Stomach (tissue), 19 donors: ENCODE measurements at regions of chr21 and their contacts with region 1.

Region 1: DNA sequence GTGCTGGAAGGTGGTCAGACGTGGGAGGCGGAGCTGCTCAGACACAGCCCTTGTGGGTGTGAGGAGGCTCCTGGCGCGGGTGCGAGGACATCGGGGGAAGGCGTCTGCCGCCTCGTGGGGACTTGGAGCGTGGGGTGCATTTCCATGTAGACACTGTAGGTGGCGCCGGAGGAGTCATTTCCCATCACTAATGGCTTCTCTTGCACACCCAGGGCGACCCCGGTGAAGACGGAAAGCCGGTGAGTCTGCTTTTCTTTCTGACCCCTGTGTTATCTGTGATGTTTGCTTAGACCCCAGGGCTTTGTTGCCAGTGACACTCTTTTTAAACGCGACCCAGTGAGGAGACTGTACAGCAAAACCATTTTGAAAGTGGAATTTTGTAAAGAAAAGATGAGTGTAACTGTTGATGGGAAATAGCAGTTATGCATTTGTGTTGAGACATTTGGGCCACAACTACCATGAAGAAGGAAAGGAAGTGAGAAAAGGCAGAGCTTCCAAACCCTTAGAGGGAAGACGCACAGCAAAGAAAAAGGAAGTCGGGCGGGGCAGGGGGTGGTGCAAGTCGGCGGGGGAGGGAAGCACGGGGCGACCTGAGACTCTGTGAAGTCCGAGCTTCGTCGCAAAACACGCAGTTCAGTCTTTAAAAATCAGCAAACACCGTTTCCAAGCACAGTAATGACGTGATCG is 64.0 kb downstream of the SLC19A1 start:
- DNase-seq: peak; percentile 75 to 90
- H3K4me3 ChIP-seq: peak overlapping the region; percentile 3 to 42 (median 30)
- H3K27ac ChIP-seq: peak overlapping the region; percentile 26 to 73 (median 62)
- H3K4me1 ChIP-seq: peaks cover 11 to 28% (median 16%) of the 10 kb centered on the region in 4 donors
- H3K27me3 ChIP-seq: peaks cover 0 to 5% (median 0%) of the 10 kb centered on the region in 3 donors
- CTCF ChIP-seq: peak in 6 of 7 experiments; percentile 17 to 93 (median 87)
- EP300 ChIP-seq: no peak
- POLR2A ChIP-seq: no peak

Region 2: GRCh38 chr21:45596704-45597318 is 118.6 kb after region 1 on chr21:
- intact Hi-C with region 1: loop called (anchors 5 kb)
- DNase-seq: peak; percentile 81 to 87
- H3K4me3 ChIP-seq: no peak overlapping the region
- H3K27ac ChIP-seq: no peak overlapping the region
- H3K4me1 ChIP-seq: peaks cover 0 to 10% (median 4%) of the 10 kb centered on the region in 4 donors
- H3K27me3 ChIP-seq: peaks cover 0 to 31% (median 4%) of the 10 kb centered on the region in 3 donors
- CTCF ChIP-seq: peak in 5 of 7 experiments; percentile 71 to 88 (median 78)
- EP300 ChIP-seq: no peak
- POLR2A ChIP-seq: no peak

Region 3: GRCh38 chr21:45643021-45643980 is 165.0 kb after region 1 on chr21 and contains the start of gene PCBP3:
- intact Hi-C with region 1: no loop called
- DNase-seq: peak; percentile 96
- H3K4me3 ChIP-seq: peak within 1 kb of the TSS; percentile 51 to 68 (median 54)
- H3K27ac ChIP-seq: peak within 1 kb of the TSS in 3 of 5 donors; percentile 25 to 86 (median 76)
- H3K4me1 ChIP-seq: peaks cover 11 to 39% (median 24%) of the 10 kb centered on the region in 4 donors
- H3K27me3 ChIP-seq: peaks cover 0 to 45% (median 21%) of the 10 kb centered on the region in 3 donors
- CTCF ChIP-seq: no peak
- EP300 ChIP-seq: no peak
- POLR2A ChIP-seq: no peak
- total RNA-seq, gene PCBP3: 4.2 to 10.9 TPM in 2 of 5 donors, not detected in the others